H1 (cell line): ENCODE measurements at regions of chr19 and their contacts with region 1.

Region 1: DNA sequence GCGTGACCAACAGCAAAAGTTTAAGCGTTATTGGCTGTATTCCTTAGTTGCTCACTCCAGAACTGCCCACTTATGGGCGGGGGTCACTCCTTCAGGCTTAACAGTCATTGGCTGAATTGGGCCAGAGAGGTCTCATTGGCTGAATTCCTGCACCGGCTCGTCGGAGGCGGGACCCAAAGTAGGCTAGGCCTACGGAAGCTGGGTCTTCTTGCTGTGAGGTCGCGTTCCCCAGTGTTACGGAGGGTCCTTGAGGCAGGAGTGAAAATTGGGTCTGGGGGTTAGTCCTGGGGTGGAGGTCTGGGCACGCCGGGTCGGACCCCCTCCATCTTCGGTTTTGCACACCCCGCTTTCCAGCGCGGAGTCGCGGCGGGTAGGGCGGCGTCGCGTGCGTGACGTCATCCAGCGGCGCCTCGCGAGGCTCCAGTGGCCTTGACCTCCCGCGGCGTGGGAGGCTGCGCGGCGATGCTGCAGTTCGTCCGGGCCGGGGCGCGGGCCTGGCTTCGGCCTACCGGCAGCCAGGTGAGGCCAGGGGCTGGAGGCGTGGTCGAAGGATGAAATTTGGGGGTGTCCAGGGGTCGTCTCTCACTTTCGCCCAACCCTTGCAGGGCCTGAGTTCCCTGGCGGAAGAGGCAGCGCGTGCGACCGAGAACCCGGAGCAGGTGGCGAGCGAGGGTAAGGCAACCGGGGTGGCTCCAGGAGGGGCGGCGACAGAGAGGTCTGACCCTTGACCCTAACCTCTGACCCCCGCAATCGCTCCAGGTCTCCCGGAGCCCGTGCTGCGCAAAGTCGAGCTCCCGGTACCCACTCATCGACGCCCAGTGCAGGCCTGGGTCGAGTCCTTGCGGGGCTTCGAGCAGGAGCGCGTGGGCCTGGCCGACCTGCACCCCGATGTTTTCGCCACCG is at the start of gene MRPL4:
- DNase-seq: peak; percentile 85 to 97
- H3K4me3 ChIP-seq: peak within 1 kb of the TSS; percentile 74 to 100 (median 91)
- H3K27ac ChIP-seq: peak within 1 kb of the TSS; percentile 90
- H3K4me1 ChIP-seq: peaks cover 0 to 4% (median 1%) of the 10 kb centered on the region in 4 experiments; a peak in 1 of 7 replicates
- H3K27me3 ChIP-seq: no peaks in the 10 kb centered on the region
- CTCF ChIP-seq: no peak
- EP300 ChIP-seq: no peak
- POLR2A ChIP-seq: peak; percentile 32 to 79
- RAD21 ChIP-seq: no peak
- total RNA-seq, gene MRPL4: 82.3 and 90.7 TPM in 2 replicates

Region 2: GRCh38 chr19:10180463-10180862 is 71.6 kb before region 1 on chr19:
- CTCF ChIA-PET with region 1: interaction called, 22 read pairs
- POLR2A ChIA-PET with region 1: interaction called, 3 read pairs
- DNase-seq: no peak
- H3K4me3 ChIP-seq: no peak overlapping the region
- H3K27ac ChIP-seq: no peak overlapping the region
- H3K4me1 ChIP-seq: no peaks in the 10 kb centered on the region
- H3K27me3 ChIP-seq: no peaks in the 10 kb centered on the region
- CTCF ChIP-seq: no peak
- EP300 ChIP-seq: no peak
- POLR2A ChIP-seq: no peak
- RAD21 ChIP-seq: no peak

Region 3: GRCh38 chr19:10206226-10206885 is 45.7 kb before region 1 on chr19:
- CTCF ChIA-PET with region 1: interaction called, 11 read pairs
- POLR2A ChIA-PET with region 1: interaction called, 4 read pairs
- DNase-seq: no peak
- H3K4me3 ChIP-seq: no peak overlapping the region
- H3K27ac ChIP-seq: no peak overlapping the region
- H3K4me1 ChIP-seq: peaks cover 0 to 3% (median 0%) of the 10 kb centered on the region in 4 experiments; a peak in 1 of 7 replicates
- H3K27me3 ChIP-seq: no peaks in the 10 kb centered on the region
- CTCF ChIP-seq: no peak
- EP300 ChIP-seq: no peak
- POLR2A ChIP-seq: no peak
- RAD21 ChIP-seq: no peak

Region 4: GRCh38 chr19:10230861-10231611 is 21.0 kb before region 1 on chr19 and contains the start of gene S1PR2:
- CTCF ChIA-PET with region 1: interaction called, 57 read pairs
- POLR2A ChIA-PET with region 1: interaction called, 4 read pairs
- DNase-seq: peak in 1 of 2 experiments; percentile 87
- H3K4me3 ChIP-seq: peak within 1 kb of the TSS; percentile 61 to 88 (median 78)
- H3K27ac ChIP-seq: peak within 1 kb of the TSS; percentile 83
- H3K4me1 ChIP-seq: peaks cover 3 to 7% (median 3%) of the 10 kb centered on the region in 4 experiments; a peak in 4 of 7 replicates
- H3K27me3 ChIP-seq: 0 out of 7 replicates have a peak, but pooled peaks cover 0 to 3% (median 0%) of the 10 kb centered on the region in 4 experiments
- CTCF ChIP-seq: no peak
- EP300 ChIP-seq: no peak
- POLR2A ChIP-seq: peak; percentile 43 to 52
- RAD21 ChIP-seq: no peak
- total RNA-seq, gene S1PR2: 18.7 and 19.4 TPM in 2 replicates